ENCODE measurements at regions of chr15 and their contacts with region 1.

Region 1: GRCh38 chr15:62306851-62307504 is 141.9 kb upstream of the C2CD4B start:
- DNase-seq: peak; percentile 55
- H3K4me3 ChIP-seq: no peak overlapping the region
- H3K27ac ChIP-seq: peak overlapping the region; percentile 22
- H3K4me1 ChIP-seq: peaks cover 12% of the 10 kb centered on the region
- H3K27me3 ChIP-seq: no peaks in the 10 kb centered on the region
- CTCF ChIP-seq: peak; percentile 57 to 70

Region 2: DNA sequence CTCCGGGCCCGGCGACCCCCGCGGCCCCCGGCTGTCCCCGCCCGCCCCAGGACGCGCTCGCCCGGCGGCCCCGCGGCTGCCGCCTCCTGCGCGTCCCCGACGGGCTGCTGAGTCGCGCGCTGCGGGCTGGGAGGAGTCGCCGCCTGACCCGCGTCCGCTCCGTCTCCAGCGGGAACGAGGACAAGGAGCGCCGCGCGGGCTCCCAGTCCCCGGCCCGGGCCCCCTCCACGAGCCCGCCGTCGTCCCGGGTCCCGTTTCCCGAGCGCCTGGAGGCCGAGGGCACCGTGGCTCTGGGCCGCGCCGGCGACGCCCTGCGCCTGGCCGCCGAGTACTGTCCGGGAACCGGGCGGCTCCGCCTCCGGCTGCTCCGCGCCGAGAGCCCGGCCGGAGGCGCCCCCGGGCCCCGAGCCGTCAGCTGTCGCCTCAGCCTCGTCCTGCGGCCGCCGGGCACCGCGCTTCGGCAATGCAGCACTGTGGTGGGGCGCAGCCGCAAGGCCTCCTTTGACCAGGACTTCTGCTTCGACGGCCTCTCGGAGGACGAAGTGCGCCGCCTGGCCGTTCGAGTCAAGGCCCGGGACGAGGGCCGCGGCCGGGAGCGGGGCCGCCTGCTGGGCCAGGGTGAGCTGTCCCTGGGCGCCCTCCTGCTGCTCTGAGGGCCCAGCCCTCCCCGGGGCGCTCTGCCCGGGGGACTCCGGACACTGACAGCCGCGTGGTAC is 238.7 kb before region 1 on chr15:
- CTCF ChIA-PET with region 1: interaction called, 6 read pairs
- dilution Hi-C with region 1: no loop called
- in situ Hi-C with region 1: no loop called
- intact Hi-C with region 1: loop called (anchors 1 kb)
- DNase-seq: peak; percentile 21
- H3K4me3 ChIP-seq: peak overlapping the region in 2 of 3 experiments; percentile 31 to 47
- H3K27ac ChIP-seq: no peak overlapping the region
- H3K4me1 ChIP-seq: peaks cover 39% of the 10 kb centered on the region
- H3K27me3 ChIP-seq: peaks cover 4% of the 10 kb centered on the region
- CTCF ChIP-seq: no peak

Region 3: DNA sequence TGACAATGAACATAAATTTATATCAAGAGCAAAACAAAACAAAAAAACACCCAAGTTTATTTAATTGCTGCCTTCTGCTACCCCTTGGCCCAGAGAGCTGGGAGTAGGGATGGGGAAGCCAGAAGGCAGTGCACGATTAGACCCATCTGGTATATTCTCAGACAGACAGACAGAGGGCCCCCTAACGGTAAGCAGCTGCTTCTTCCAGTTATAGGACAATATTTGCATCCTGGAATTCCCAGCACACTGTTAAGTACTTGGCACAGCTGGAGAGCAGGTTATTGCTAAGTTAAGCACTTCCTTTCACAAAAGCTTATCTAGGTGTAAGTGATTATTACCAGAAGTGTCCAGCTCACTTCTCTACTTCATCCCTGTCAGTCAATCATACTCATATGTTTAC is 181.2 kb before region 1 on chr15:
- CTCF ChIA-PET with region 1: interaction called, 15 read pairs
- dilution Hi-C with region 1: no loop called
- in situ Hi-C with region 1: no loop called
- intact Hi-C with region 1: loop called (anchors 1 kb)
- DNase-seq: peak; percentile 60
- H3K4me3 ChIP-seq: no peak overlapping the region
- H3K27ac ChIP-seq: no peak overlapping the region
- H3K4me1 ChIP-seq: no peaks in the 10 kb centered on the region
- H3K27me3 ChIP-seq: no peaks in the 10 kb centered on the region
- CTCF ChIP-seq: peak; percentile 67 to 80

Region 4: GRCh38 chr15:62228604-62229003 is 78.4 kb before region 1 on chr15:
- CTCF ChIA-PET with region 1: no interaction called
- dilution Hi-C with region 1: loop called (anchors 5 kb)
- in situ Hi-C with region 1: no loop called
- intact Hi-C with region 1: no loop called
- DNase-seq: no peak
- H3K4me3 ChIP-seq: no peak overlapping the region
- H3K27ac ChIP-seq: no peak overlapping the region
- H3K4me1 ChIP-seq: no peaks in the 10 kb centered on the region
- H3K27me3 ChIP-seq: no peaks in the 10 kb centered on the region
- CTCF ChIP-seq: no peak

Region 5: GRCh38 chr15:62337934-62338333 is 31.0 kb after region 1 on chr15:
- CTCF ChIA-PET with region 1: interaction called, 9 read pairs
- dilution Hi-C with region 1: no loop called
- in situ Hi-C with region 1: no loop called
- intact Hi-C with region 1: loop called (anchors 1 kb)
- DNase-seq: peak; percentile 88
- H3K4me3 ChIP-seq: no peak overlapping the region
- H3K27ac ChIP-seq: no peak overlapping the region
- H3K4me1 ChIP-seq: peaks cover 26% of the 10 kb centered on the region
- H3K27me3 ChIP-seq: no peaks in the 10 kb centered on the region
- CTCF ChIP-seq: no peak

Region 6: GRCh38 chr15:62362608-62363007 is 55.6 kb after region 1 on chr15:
- CTCF ChIA-PET with region 1: no interaction called
- dilution Hi-C with region 1: no loop called
- in situ Hi-C with region 1: no loop called
- intact Hi-C with region 1: no loop called
- DNase-seq: peak; percentile 40
- H3K4me3 ChIP-seq: no peak overlapping the region
- H3K27ac ChIP-seq: no peak overlapping the region
- H3K4me1 ChIP-seq: no peaks in the 10 kb centered on the region
- H3K27me3 ChIP-seq: peaks cover 2% of the 10 kb centered on the region
- CTCF ChIP-seq: no peak

Region 7: GRCh38 chr15:62439543-62440016 is 132.6 kb after region 1 on chr15:
- CTCF ChIA-PET with region 1: no interaction called
- dilution Hi-C with region 1: no loop called
- in situ Hi-C with region 1: no loop called
- intact Hi-C with region 1: no loop called
- DNase-seq: no peak
- H3K4me3 ChIP-seq: no peak overlapping the region
- H3K27ac ChIP-seq: no peak overlapping the region
- H3K4me1 ChIP-seq: peaks cover 10% of the 10 kb centered on the region
- H3K27me3 ChIP-seq: no peaks in the 10 kb centered on the region
- CTCF ChIP-seq: no peak